Right lobe of liver (tissue), 6 donors: ENCODE measurements at regions of chr12 and their contacts with region 1.

Region 1: GRCh38 chr12:9049520-9050133 is 60.3 kb downstream of the KLRG1 start:
- DNase-seq: no peak
- ATAC-seq: peak; percentile 56 to 69 (median 65)
- H3K4me3 ChIP-seq: no peak overlapping the region
- H3K27ac ChIP-seq: no peak overlapping the region
- H3K4me1 ChIP-seq: no peaks in the 10 kb centered on the region
- H3K27me3 ChIP-seq: no peaks in the 10 kb centered on the region
- CTCF ChIP-seq: peak; percentile 47 to 63 (median 60)
- POLR2A ChIP-seq: no peak

Region 2: DNA sequence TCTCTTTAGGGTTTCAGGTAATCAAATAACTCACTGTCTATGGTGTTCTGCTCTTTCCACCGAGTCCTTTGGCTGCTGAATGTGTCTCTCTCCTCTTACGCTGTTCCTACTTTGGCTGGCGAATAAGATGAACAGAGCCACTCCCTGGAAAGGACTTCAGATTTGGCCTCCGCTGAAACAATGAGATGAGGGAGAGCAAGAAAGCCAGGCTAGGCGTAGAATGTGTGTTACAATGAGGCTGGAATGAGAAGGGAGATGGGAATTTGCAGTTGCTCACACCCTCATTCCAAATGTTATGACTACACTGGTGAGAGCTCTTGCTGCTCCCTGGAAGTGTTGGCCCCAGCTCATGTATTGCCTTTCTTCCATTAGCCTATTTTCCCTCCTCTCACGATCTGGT is 387.0 kb before region 1 on chr12 and contains the start of gene MFAP5:
- intact Hi-C with region 1: loop called in 1 of 2 experiments (anchors 10 kb)
- DNase-seq: no peak
- ATAC-seq: no peak
- H3K4me3 ChIP-seq: no peak within 1 kb of the TSS
- H3K27ac ChIP-seq: no peak within 1 kb of the TSS
- H3K4me1 ChIP-seq: no peaks in the 10 kb centered on the region
- H3K27me3 ChIP-seq: no peaks in the 10 kb centered on the region
- CTCF ChIP-seq: no peak
- POLR2A ChIP-seq: no peak
- total RNA-seq, gene MFAP5: 0.12 to 0.39 TPM in 2 of 6 experiments, not detected in the others

Region 3: DNA sequence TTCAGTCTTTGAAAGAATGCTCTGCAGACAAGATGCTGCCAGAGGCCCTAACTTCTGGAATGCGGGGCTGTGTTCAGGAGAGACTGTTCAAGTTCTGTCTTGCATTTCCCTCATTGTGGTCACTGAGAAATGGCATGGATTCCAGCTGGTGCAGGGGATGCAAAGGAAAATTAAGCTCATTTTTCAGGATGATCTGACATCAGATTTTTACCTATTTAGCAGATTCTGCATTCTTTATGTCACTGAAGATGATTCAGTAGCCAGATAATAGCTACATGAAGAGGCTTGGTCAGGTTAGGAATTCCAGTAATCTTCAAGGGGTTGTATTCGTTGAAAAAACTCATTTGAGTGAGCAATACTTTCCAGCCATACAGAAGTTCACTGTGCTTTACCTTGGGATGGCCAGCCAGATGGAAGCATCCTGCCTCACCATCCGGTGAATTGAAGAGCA is 370.9 kb before region 1 on chr12:
- intact Hi-C with region 1: loop called in 1 of 2 experiments (anchors 10 kb)
- DNase-seq: no peak
- ATAC-seq: no peak
- H3K4me3 ChIP-seq: no peak overlapping the region
- H3K27ac ChIP-seq: no peak overlapping the region
- H3K4me1 ChIP-seq: no peaks in the 10 kb centered on the region
- H3K27me3 ChIP-seq: no peaks in the 10 kb centered on the region
- CTCF ChIP-seq: no peak
- POLR2A ChIP-seq: no peak